Sigmoid colon (tissue), 7 donors: ENCODE measurements at regions of chr20 and their contacts with region 1.

Region 1: GRCh38 chr20:37384683-37385174 is 38.8 kb downstream of the SRC start:
- DNase-seq: peak; percentile 84
- H3K4me3 ChIP-seq: peak overlapping the region; percentile 10 to 54 (median 48)
- H3K27ac ChIP-seq: peak overlapping the region in 3 of 4 donors; percentile 43 to 71 (median 69)
- H3K4me1 ChIP-seq: peaks cover 0 to 23% (median 17%) of the 10 kb centered on the region in 4 donors
- H3K27me3 ChIP-seq: no peaks in the 10 kb centered on the region
- CTCF ChIP-seq: peak; percentile 88 to 96 (median 90)
- EP300 ChIP-seq: no peak
- POLR2A ChIP-seq: no peak

Region 2: DNA sequence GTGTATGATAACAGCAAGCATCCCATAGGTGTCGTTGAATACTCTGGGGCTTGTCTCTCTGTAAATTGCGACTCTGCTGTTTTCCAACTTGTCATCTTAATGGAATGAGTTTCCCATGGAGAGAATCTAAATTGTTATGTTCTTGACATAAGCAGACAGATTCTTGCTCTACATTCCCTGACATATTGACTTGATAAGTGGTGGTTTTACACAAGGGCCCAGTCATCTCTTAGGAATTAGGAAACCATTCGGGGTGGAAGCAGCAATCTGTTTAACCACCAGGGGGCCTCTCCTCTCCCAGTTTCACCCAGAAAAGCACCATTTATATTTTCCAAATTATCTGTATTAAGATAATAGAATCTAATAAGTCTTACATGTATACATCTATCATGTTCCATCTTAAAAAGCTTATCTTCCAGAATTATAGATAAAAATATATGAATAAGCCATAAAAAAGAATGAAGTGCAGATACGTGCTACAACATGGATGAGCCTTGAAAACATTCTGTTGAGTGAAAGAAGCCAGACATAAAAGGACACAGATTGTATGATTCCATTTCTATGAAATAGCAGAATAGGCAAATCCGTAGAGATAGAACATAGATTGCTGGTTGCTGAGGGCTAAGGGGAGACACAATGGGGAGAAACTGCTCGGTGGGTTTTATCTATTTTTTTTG is 182.3 kb before region 1 on chr20:
- intact Hi-C with region 1: loop called (anchors 10 kb)
- DNase-seq: no peak
- H3K4me3 ChIP-seq: no peak overlapping the region
- H3K27ac ChIP-seq: peak overlapping the region; percentile 47 to 76 (median 63)
- H3K4me1 ChIP-seq: peaks cover 0 to 14% (median 7%) of the 10 kb centered on the region in 4 donors
- H3K27me3 ChIP-seq: no peaks in the 10 kb centered on the region
- CTCF ChIP-seq: peak; percentile 53 to 79 (median 65)
- EP300 ChIP-seq: no peak
- POLR2A ChIP-seq: no peak

Region 3: GRCh38 chr20:37282556-37282955 is 102.2 kb before region 1 on chr20:
- intact Hi-C with region 1: loop called (anchors 1 kb)
- DNase-seq: peak; percentile 82
- H3K4me3 ChIP-seq: no peak overlapping the region
- H3K27ac ChIP-seq: peak overlapping the region; percentile 34 to 71 (median 67)
- H3K4me1 ChIP-seq: peaks cover 0 to 9% (median 4%) of the 10 kb centered on the region in 4 donors
- H3K27me3 ChIP-seq: no peaks in the 10 kb centered on the region
- CTCF ChIP-seq: peak; percentile 62 to 82 (median 66)
- EP300 ChIP-seq: no peak
- POLR2A ChIP-seq: no peak

Region 4: GRCh38 chr20:37345339-37346230 is 39.1 kb before region 1 on chr20 and contains the start of gene SRC:
- intact Hi-C with region 1: loop called (anchors 2 kb)
- DNase-seq: peak; percentile 95
- H3K4me3 ChIP-seq: peak within 1 kb of the TSS; percentile 60 to 95 (median 83)
- H3K27ac ChIP-seq: peak within 1 kb of the TSS; percentile 89 to 99 (median 93)
- H3K4me1 ChIP-seq: peaks cover 0 to 52% (median 46%) of the 10 kb centered on the region in 4 donors
- H3K27me3 ChIP-seq: no peaks in the 10 kb centered on the region
- CTCF ChIP-seq: no peak
- EP300 ChIP-seq: no peak
- POLR2A ChIP-seq: peak; percentile 59 to 61
- total RNA-seq, gene SRC: 28.1 to 52.3 (median 40.0) TPM

Region 5: DNA sequence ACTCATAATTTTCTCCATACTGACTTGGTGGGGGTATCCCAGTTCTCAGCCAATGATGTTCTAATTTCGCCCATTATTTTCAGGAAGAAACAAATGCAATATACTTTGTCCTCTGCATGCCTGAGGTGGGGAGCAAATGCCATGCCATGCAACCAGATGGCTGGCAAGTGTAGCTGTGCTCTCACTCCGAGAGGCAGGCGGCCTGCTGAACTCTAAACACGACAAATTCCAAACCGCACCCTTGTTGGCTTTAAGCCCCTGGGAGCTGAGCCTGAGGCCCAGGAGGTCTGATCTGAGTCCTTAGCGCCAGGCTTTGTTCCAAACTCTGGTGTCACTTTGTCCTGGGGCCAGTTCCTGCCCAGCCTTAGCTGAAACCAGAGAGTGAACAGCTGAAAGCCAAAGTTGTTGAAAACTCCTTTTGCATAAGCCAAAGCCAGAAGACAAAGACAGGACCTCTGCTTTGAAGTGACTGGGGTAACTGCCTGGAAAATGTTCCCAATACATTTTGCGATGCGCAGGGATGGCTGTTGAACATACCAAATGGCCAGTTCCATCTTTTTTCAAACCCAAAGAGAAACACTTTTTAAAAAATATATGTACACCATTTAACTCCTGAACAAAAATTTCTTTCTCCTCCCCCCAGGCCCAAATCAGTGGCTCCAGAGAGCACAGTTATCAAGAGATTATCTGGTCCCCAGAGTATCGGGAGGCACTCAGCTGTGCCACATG is 602.3 kb after region 1 on chr20:
- intact Hi-C with region 1: no loop called
- DNase-seq: no peak
- H3K4me3 ChIP-seq: no peak overlapping the region
- H3K27ac ChIP-seq: peak overlapping the region; percentile 29 to 68 (median 45)
- H3K4me1 ChIP-seq: peaks cover 0 to 27% (median 17%) of the 10 kb centered on the region in 4 donors
- H3K27me3 ChIP-seq: no peaks in the 10 kb centered on the region
- CTCF ChIP-seq: no peak
- EP300 ChIP-seq: no peak
- POLR2A ChIP-seq: no peak